Endothelial cell of umbilical vein (primary cell): ENCODE measurements at regions of chr18 and their contacts with region 1.

Region 1: DNA sequence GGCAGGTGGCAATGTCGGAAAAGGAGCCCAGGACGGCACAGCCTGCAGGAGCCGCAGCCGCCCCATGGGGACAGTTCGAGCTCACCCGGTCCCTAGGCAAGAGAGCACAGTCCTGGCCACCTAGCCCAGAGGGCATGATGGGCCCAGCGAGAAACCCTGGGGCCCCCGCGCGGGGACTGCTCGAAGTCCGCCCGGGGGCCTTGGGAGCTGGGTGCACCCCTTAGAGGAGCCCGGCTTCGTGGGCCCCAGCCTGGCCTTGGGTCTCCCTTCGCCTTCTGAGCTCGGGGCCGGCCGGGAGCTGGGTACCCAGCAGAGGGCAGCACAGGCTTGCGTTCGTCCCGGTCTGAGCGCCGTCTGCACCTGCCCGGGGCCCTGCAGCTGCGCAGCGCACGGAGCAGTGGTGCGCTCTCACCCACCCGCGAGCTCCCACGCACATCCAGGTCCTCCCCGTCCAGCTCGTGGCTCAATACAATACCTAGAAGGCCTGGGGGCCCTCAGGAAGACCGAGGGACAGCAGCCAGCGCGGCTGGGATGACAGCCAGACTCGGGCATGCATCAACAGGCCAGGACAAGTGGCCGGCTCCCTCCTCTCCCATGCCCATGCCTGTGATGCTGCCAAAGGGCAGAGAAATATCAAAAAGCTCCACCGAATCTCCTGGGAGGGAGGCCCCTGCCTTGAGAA is 96.2 kb upstream of the ZNF532 start:
- DNase-seq: peak; percentile 58
- H3K4me3 ChIP-seq: no peak overlapping the region
- H3K27ac ChIP-seq: no peak overlapping the region
- H3K4me1 ChIP-seq: peaks cover 2% of the 10 kb centered on the region
- H3K27me3 ChIP-seq: peaks cover 7 to 25% of the 10 kb centered on the region in 2 experiments
- CTCF ChIP-seq: peak; percentile 86 to 99
- POLR2A ChIP-seq: no peak

Region 2: GRCh38 chr18:58043491-58044379 is 724.7 kb before region 1 on chr18 and contains the start of gene NEDD4L:
- CTCF ChIA-PET with region 1: interaction called, 10 read pairs
- POLR2A ChIA-PET with region 1: no interaction called
- dilution Hi-C with region 1: no loop called
- intact Hi-C with region 1: no loop called
- DNase-seq: peak; percentile 87
- H3K4me3 ChIP-seq: peak within 1 kb of the TSS; percentile 75 to 93 (median 77)
- H3K27ac ChIP-seq: peak within 1 kb of the TSS; percentile 72
- H3K4me1 ChIP-seq: peaks cover 16% of the 10 kb centered on the region
- H3K27me3 ChIP-seq: no peaks in the 10 kb centered on the region
- CTCF ChIP-seq: peak; percentile 79 to 91
- POLR2A ChIP-seq: no peak
- total RNA-seq, gene NEDD4L: 78.9 and 95.9 TPM in 2 replicates

Region 3: DNA sequence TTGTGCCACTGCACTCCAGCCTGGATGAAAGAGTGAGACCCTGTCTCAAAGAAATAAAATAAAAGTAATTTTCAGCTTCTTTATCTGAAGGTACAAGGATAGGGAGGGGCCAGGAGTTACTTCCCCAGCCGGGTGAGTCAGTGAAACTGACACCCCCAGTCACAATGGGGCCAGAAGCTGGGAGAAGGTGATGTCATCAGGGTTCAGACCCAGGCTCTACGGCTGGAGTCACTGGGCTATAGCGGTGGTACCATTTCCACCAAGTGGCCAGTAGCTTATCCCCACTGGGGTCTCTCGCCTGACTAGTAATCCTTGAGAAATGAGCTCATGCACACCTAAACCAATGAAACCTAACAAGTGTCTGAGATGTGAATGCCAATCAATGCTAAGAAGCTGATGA is 247.5 kb before region 1 on chr18:
- CTCF ChIA-PET with region 1: interaction called, 603 read pairs
- POLR2A ChIA-PET with region 1: no interaction called
- dilution Hi-C with region 1: loop called (anchors 25 kb)
- intact Hi-C with region 1: no loop called
- DNase-seq: no peak
- H3K4me3 ChIP-seq: no peak overlapping the region
- H3K27ac ChIP-seq: no peak overlapping the region
- H3K4me1 ChIP-seq: no peaks in the 10 kb centered on the region
- H3K27me3 ChIP-seq: peaks cover 5 to 15% of the 10 kb centered on the region in 2 experiments
- CTCF ChIP-seq: no peak
- POLR2A ChIP-seq: no peak

Region 4: DNA sequence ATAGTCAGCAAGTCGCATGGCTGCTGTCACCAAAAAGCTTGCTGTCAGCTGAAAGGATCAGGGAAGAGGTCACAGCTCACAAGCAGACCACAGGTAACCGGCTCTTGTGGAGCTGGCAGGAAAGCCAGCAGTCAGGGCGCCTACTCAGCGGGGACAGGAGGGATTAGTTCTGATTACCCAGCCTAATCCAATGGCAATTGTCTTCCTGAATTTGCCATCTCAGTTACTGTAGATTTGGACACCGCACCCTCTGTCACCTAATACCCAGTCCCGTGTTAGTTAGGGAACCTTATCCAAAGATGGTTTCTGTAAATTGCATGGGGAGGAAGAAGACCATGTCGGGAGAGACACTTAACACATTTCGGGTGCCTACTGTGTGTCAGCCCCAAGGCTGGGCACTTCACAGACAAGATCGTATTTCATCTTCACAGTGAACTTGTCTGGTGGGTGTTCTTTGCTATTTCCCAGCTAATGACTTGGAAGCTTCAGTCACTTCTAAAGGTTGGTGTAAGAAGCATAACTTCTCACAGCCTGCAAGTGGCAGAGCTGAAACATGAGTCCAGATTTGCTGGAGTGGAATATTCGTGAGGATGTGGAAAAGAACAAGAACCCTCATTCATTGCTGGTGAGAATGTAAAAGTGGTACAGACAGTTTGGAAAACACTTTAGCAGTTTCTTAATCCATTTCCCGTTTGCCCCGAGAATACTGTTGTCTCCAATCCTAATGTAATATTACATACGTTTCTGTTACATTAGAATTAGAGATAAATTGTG is 149.4 kb before region 1 on chr18:
- CTCF ChIA-PET with region 1: interaction called, 11 read pairs
- POLR2A ChIA-PET with region 1: no interaction called
- dilution Hi-C with region 1: no loop called
- intact Hi-C with region 1: no loop called
- DNase-seq: no peak
- H3K4me3 ChIP-seq: no peak overlapping the region
- H3K27ac ChIP-seq: no peak overlapping the region
- H3K4me1 ChIP-seq: no peaks in the 10 kb centered on the region
- H3K27me3 ChIP-seq: peaks cover 0 to 5% of the 10 kb centered on the region in 2 experiments
- CTCF ChIP-seq: no peak
- POLR2A ChIP-seq: no peak

Region 5: DNA sequence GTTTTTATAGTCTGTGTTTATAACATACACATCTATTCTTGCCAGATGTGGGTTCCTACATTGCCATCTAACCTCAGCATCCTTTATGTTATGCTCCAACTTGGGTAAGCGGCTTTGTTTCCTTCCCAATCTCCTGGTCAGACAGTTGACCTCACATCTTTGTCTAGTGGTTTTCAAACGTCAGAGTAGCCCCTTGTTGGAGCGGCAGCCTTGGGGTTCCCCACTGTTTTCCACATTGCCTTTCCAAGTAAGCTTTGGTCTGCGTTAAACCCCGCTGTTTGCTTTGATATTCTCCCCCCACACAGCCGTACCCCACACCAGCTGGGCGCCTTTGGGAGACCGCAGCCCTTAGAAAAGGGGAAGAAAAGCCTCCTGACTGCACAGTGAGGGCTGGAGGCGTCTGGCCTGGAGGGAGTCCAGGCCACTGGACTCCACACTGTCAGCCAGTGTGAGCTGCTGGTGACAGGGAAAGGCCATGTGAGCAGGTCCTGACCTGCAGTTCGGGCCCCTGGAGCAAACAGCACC is 13.8 kb before region 1 on chr18:
- CTCF ChIA-PET with region 1: interaction called, 57 read pairs
- POLR2A ChIA-PET with region 1: no interaction called
- dilution Hi-C with region 1: no loop called
- intact Hi-C with region 1: no loop called
- DNase-seq: no peak
- H3K4me3 ChIP-seq: no peak overlapping the region
- H3K27ac ChIP-seq: no peak overlapping the region
- H3K4me1 ChIP-seq: no peaks in the 10 kb centered on the region
- H3K27me3 ChIP-seq: no peaks in the 10 kb centered on the region
- CTCF ChIP-seq: no peak
- POLR2A ChIP-seq: no peak

Region 6: GRCh38 chr18:59075923-59076322 is 307.5 kb after region 1 on chr18:
- CTCF ChIA-PET with region 1: interaction called, 994 read pairs
- POLR2A ChIA-PET with region 1: interaction called, 3 read pairs
- dilution Hi-C with region 1: no loop called
- intact Hi-C with region 1: no loop called
- DNase-seq: peak; percentile 31
- H3K4me3 ChIP-seq: no peak overlapping the region
- H3K27ac ChIP-seq: no peak overlapping the region
- H3K4me1 ChIP-seq: no peaks in the 10 kb centered on the region
- H3K27me3 ChIP-seq: peaks cover 7 to 12% of the 10 kb centered on the region in 2 experiments
- CTCF ChIP-seq: no peak
- POLR2A ChIP-seq: no peak